ENCODE measurements at regions of chr15 and their contacts with region 1.

Region 1: GRCh38 chr15:63466378-63467192 is 37.8 kb upstream of the USP3 start:
- DNase-seq: peak; percentile 46
- H3K4me3 Mint-ChIP-seq: no peak overlapping the region
- H3K27ac Mint-ChIP-seq: peak overlapping the region; percentile 35
- H3K4me1 Mint-ChIP-seq: peaks cover 23% of the 10 kb centered on the region
- H3K27me3 Mint-ChIP-seq: no peaks in the 10 kb centered on the region

Region 2: GRCh38 chr15:63172376-63173109 is 294.0 kb before region 1 on chr15:
- CTCF ChIA-PET with region 1: no interaction called
- POLR2A ChIA-PET with region 1: no interaction called
- intact Hi-C with region 1: no loop called
- DNase-seq: no peak
- H3K4me3 Mint-ChIP-seq: no peak overlapping the region
- H3K27ac Mint-ChIP-seq: no peak overlapping the region
- H3K4me1 Mint-ChIP-seq: peaks cover 11% of the 10 kb centered on the region
- H3K27me3 Mint-ChIP-seq: no peaks in the 10 kb centered on the region

Region 3: DNA sequence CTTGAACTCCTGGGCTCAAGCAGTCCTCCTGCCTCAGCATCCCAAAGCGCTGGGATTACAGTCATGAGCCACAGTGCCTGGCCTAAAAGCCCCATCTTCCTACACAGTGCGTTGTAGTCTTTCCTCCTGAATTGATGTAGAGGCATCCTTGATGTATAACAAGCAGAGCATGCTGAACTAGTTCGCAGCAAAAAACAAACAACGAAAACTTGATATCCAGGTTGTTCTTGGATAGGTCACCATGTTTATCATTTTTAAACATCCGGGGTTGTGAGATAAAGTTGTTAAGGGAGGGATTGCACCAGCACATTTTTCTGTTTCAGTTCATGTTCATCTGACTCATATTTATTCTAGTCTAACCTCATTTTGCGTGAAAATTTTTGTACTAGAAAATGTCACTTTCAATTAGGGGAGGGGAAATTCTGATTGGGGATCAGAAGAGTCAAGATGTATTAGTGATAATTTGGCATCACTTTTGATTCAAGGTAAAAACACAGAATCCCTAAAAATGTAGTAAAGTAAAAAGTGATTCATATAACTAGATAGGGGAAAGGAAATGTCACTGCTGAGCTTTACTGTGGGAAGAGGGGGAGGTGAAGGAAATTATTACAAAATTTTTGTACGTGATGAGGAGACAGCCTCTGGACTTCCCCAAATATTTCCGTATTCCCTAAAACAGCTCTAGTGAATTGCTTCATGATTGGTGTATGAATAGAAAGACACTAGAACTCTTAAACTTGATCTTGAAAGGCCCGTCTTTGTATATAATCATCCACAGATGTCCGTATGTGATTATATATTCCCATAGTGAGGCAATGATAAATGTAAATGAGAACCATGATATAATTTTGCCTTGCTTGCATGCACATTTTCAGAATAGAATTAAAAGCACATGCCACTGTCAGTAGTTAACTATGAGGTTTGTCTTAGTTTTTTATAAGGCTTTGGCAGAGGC is 254.3 kb before region 1 on chr15:
- CTCF ChIA-PET with region 1: no interaction called
- POLR2A ChIA-PET with region 1: no interaction called
- intact Hi-C with region 1: no loop called
- DNase-seq: no peak
- H3K4me3 Mint-ChIP-seq: peak overlapping the region; percentile 64
- H3K27ac Mint-ChIP-seq: peak overlapping the region; percentile 97
- H3K4me1 Mint-ChIP-seq: peaks cover 83% of the 10 kb centered on the region
- H3K27me3 Mint-ChIP-seq: no peaks in the 10 kb centered on the region

Region 4: DNA sequence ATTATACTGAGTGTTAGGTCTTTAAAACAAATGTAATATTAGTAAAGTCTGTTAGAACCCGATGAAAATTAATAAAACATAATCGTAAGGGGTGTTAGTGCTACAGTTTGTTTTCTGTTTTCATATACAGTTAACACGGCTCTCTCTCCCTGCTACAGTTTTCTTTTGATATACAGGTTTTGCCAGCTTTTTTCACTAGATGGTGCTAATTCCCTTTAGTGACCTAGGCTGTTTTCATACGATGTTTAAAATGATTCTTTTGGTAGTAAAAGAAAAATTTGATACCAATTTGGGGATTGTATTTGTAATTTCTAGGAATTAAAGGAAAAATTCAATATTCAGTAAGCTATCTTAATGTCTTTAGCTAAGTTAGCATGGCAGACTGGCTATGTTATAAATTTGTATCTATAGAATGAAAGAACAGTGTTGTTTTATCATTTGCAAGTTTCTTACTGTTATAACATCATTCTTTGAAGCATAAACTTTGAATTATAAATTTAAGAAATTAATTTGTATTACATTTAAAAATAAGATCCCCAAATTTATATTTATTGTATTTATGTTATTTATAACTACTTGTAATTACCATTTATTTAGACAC is 177.7 kb before region 1 on chr15:
- CTCF ChIA-PET with region 1: interaction called, 12 read pairs
- POLR2A ChIA-PET with region 1: no interaction called
- intact Hi-C with region 1: no loop called
- DNase-seq: no peak
- H3K4me3 Mint-ChIP-seq: no peak overlapping the region
- H3K27ac Mint-ChIP-seq: no peak overlapping the region
- H3K4me1 Mint-ChIP-seq: peaks cover 7% of the 10 kb centered on the region
- H3K27me3 Mint-ChIP-seq: no peaks in the 10 kb centered on the region

Region 5: GRCh38 chr15:63487076-63487757 is 20.6 kb after region 1 on chr15:
- CTCF ChIA-PET with region 1: interaction called, 22 read pairs
- POLR2A ChIA-PET with region 1: no interaction called
- intact Hi-C with region 1: no loop called
- DNase-seq: peak; percentile 93
- H3K4me3 Mint-ChIP-seq: peak overlapping the region; percentile 56
- H3K27ac Mint-ChIP-seq: peak overlapping the region; percentile 49
- H3K4me1 Mint-ChIP-seq: peaks cover 62% of the 10 kb centered on the region
- H3K27me3 Mint-ChIP-seq: no peaks in the 10 kb centered on the region

Region 6: GRCh38 chr15:63514531-63514943 is 48.0 kb after region 1 on chr15:
- CTCF ChIA-PET with region 1: interaction called, 11 read pairs
- POLR2A ChIA-PET with region 1: no interaction called
- intact Hi-C with region 1: no loop called
- DNase-seq: no peak
- H3K4me3 Mint-ChIP-seq: peak overlapping the region; percentile 6
- H3K27ac Mint-ChIP-seq: peak overlapping the region; percentile 72
- H3K4me1 Mint-ChIP-seq: peaks cover 87% of the 10 kb centered on the region
- H3K27me3 Mint-ChIP-seq: no peaks in the 10 kb centered on the region

Region 7: DNA sequence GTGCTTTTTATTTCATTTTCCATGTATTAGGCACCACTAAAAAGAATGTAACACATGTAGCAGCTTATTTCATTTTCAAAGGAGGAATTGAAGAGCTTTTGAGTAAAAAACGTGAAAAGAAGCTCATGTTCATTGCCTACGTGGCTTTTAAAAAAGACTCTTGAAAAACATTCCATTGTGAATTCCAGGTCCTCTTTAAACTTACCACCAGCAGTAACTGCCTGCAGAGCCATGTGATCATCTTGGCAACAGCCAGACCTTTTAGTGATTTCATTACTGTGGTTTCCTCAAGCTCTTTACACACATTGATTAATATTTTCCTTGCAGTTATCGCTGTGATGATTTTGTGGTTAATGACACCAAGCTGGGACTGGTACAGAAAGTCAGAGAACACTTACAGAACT is 86.8 kb after region 1 on chr15:
- CTCF ChIA-PET with region 1: interaction called, 17 read pairs
- POLR2A ChIA-PET with region 1: no interaction called
- intact Hi-C with region 1: loop called (anchors 5 kb)
- DNase-seq: no peak
- H3K4me3 Mint-ChIP-seq: no peak overlapping the region
- H3K27ac Mint-ChIP-seq: peak overlapping the region; percentile 28
- H3K4me1 Mint-ChIP-seq: peaks cover 57% of the 10 kb centered on the region
- H3K27me3 Mint-ChIP-seq: no peaks in the 10 kb centered on the region

Region 8: DNA sequence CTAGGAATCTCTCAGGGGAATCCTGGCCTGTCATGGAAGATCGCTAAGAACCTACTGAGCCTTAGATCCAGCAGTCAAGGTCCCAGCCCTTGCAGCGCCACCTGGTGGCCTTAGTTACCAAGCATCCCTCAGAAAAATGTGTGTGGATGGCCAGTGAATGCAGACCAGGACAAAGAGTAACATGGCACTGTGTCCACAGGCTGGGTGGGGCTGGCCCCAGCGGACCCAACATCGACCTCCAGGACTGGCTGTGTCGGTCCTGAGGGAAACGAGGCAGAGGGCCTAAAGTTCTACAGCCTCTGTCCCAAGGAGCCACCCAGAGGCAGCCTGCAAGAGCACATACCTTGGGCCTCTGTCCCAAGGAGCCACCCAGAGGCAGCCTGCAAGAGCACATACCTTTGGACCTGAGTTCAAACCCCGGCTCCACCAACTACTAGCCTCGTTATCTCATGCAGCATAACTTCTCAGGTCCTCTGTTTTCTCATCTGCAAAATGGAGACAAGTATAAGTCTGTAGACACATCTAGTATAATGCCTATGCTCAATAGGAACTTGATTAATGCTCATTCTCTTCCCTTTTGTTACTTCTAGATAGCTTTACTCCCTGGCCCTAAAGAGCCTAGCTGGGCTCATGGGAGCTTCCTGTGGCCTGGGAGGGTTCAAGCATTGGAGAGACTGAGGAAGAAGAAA is 424.6 kb after region 1 on chr15:
- CTCF ChIA-PET with region 1: no interaction called
- POLR2A ChIA-PET with region 1: no interaction called
- intact Hi-C with region 1: loop called (anchors 5 kb)
- DNase-seq: peak; percentile 85
- H3K4me3 Mint-ChIP-seq: no peak overlapping the region
- H3K27ac Mint-ChIP-seq: no peak overlapping the region
- H3K4me1 Mint-ChIP-seq: peaks cover 40% of the 10 kb centered on the region
- H3K27me3 Mint-ChIP-seq: no peaks in the 10 kb centered on the region

Region 9: GRCh38 chr15:64019764-64020163 is 553.2 kb after region 1 on chr15:
- CTCF ChIA-PET with region 1: no interaction called
- POLR2A ChIA-PET with region 1: no interaction called
- intact Hi-C with region 1: no loop called
- DNase-seq: no peak
- H3K4me3 Mint-ChIP-seq: no peak overlapping the region
- H3K27ac Mint-ChIP-seq: no peak overlapping the region
- H3K4me1 Mint-ChIP-seq: no peaks in the 10 kb centered on the region
- H3K27me3 Mint-ChIP-seq: no peaks in the 10 kb centered on the region

Measured in activated CD4-positive, alpha-beta memory T cell treated with anti-CD3 and anti-CD28 coated beads for 36 hours (primary cell).